CD4-positive, alpha-beta memory T cell (primary cell): ENCODE measurements at regions of chrX and their contacts with region 1.

Region 1: GRCh38 chrX:103686199-103687072 is at the start of gene MORF4L2:
- DNase-seq: peak; percentile 84 to 98 (median 94)
- H3K4me3 ChIP-seq: peak within 1 kb of the TSS; percentile 91 to 94
- H3K4me3 Mint-ChIP-seq: peak within 1 kb of the TSS in 7 of 8 donors; percentile 74 to 83 (median 79)
- H3K27ac ChIP-seq: peak within 1 kb of the TSS; percentile 85
- H3K27ac Mint-ChIP-seq: peak within 1 kb of the TSS; percentile 5 to 90 (median 84)
- H3K4me1 ChIP-seq: peaks cover 21% of the 10 kb centered on the region
- H3K4me1 Mint-ChIP-seq: peaks cover 0 to 15% (median 3%) of the 10 kb centered on the region in 4 donors
- H3K27me3 ChIP-seq: no peaks in the 10 kb centered on the region
- H3K27me3 Mint-ChIP-seq: no peaks in the 10 kb centered on the region
- total RNA-seq, gene MORF4L2: 105 to 110 TPM

Region 2: DNA sequence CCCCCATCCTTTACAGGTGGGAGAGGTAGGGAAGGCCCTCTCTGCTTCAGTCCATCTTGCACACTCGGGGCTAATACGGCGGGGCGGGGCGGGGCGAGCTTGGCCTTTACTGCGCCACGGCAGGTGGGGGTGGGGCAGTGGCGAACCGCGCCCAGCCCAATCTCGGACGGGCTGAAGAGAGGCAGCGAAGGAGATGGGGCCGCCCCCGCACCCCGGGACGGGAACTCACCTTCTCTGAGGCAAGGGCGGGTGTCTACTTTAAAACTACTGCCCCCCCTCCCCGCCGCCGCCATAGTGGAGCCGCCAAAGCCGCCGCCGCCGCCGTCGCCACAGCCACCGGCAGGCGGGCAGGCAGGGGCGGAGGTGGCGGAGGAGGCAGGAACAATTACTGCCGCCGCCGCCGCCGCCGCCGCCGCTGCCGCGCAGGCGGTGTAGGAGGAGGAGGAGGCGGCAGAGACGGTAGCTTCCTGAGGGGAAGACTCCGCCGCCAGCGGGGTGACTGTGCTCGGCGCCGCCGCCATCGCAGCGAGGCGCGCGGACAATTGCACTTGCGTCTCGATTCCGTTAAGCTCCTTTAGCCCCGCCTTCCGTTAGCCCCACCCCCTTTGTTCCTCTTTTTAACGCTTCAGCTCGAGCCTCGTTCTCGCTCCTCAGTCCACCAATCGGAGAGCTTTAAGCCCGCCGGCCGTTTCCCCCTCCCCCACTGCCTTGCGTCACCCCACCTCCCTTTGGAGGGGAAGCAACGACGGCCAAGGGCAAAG is 1754.8 kb before region 1 on chrX and contains the start of gene ZMAT1:
- CTCF ChIA-PET with region 1: no interaction called
- POLR2A ChIA-PET with region 1: interaction called, 3 read pairs
- intact Hi-C with region 1: loop called (anchors 10 kb)
- DNase-seq: peak; percentile 85 to 94 (median 89)
- H3K4me3 ChIP-seq: peak within 1 kb of the TSS in 1 of 2 donors; percentile 45
- H3K4me3 Mint-ChIP-seq: peak within 1 kb of the TSS; percentile 81 to 93 (median 88)
- H3K27ac ChIP-seq: peak within 1 kb of the TSS; percentile 66
- H3K27ac Mint-ChIP-seq: peak within 1 kb of the TSS; percentile 94 to 99 (median 95)
- H3K4me1 ChIP-seq: peaks cover 8% of the 10 kb centered on the region
- H3K4me1 Mint-ChIP-seq: peaks cover 6 to 18% (median 16%) of the 10 kb centered on the region in 4 donors
- H3K27me3 ChIP-seq: no peaks in the 10 kb centered on the region
- H3K27me3 Mint-ChIP-seq: peaks cover 0 to 2% of the 10 kb centered on the region in 2 donors
- total RNA-seq, gene ZMAT1: 39.1 to 40.0 TPM

Region 3: DNA sequence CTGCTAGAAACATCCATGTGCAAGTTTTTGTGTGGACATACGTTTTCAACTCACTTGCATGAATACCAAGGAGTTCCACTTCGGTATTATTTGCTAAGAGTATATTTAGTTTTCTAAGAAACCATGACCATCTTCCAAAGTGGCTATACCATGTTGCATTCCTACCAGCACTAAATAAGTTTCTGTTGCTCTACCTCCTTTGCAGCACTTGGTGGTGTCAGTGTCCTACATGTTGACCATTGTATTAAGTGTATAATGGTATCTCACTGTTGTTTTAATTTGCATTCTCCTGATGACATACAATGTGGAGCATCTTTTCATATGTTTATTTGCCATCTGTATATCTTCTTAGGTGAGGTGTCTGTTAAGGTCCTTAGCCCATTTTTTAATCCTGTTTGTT is 1043.2 kb before region 1 on chrX:
- CTCF ChIA-PET with region 1: no interaction called
- POLR2A ChIA-PET with region 1: no interaction called
- intact Hi-C with region 1: no loop called
- DNase-seq: no peak
- H3K4me3 ChIP-seq: no peak overlapping the region
- H3K4me3 Mint-ChIP-seq: no peak overlapping the region
- H3K27ac ChIP-seq: no peak overlapping the region
- H3K27ac Mint-ChIP-seq: no peak overlapping the region
- H3K4me1 ChIP-seq: no peaks in the 10 kb centered on the region
- H3K4me1 Mint-ChIP-seq: peaks cover 0 to 3% (median 0%) of the 10 kb centered on the region in 4 donors
- H3K27me3 ChIP-seq: no peaks in the 10 kb centered on the region
- H3K27me3 Mint-ChIP-seq: no peaks in the 10 kb centered on the region

Region 4: DNA sequence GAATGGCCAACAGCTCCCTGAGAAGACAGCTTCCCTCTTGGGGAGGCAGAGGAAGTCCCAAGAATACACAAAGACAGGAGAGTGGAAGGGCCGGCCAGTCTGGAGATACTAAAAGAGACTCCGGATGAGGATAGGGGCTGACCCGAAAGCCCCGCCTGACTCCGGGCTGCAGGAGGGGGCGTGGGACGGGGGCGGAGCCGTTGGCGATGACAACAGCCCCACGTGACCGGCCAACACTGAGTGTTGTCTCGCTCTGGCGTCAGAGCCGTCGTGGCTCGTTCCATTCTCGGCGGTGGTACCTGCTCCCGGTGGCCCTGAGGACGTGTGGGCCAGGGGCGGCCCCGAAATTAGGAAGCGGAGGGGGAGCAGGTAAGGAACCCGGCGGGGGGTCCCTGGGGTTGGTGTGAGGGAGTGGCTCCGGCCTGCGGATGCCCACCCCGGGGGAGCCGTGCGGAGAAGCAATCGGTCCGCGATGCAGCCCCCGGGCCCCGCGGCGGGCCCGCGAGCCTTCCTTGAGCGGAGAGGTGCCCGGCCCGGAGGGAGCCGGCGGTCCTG is 471.5 kb before region 1 on chrX and contains the start of gene BEX4:
- CTCF ChIA-PET with region 1: no interaction called
- POLR2A ChIA-PET with region 1: no interaction called
- intact Hi-C with region 1: loop called (anchors 2 kb)
- DNase-seq: peak; percentile 76 to 83 (median 78)
- H3K4me3 ChIP-seq: peak within 1 kb of the TSS; percentile 9 to 17
- H3K4me3 Mint-ChIP-seq: peak within 1 kb of the TSS; percentile 82 to 92 (median 88)
- H3K27ac ChIP-seq: peak within 1 kb of the TSS; percentile 77
- H3K27ac Mint-ChIP-seq: peak within 1 kb of the TSS; percentile 74 to 95 (median 90)
- H3K4me1 ChIP-seq: peaks cover 12% of the 10 kb centered on the region
- H3K4me1 Mint-ChIP-seq: peaks cover 0 to 17% (median 4%) of the 10 kb centered on the region in 4 donors
- H3K27me3 ChIP-seq: no peaks in the 10 kb centered on the region
- H3K27me3 Mint-ChIP-seq: peaks cover 0 to 1% of the 10 kb centered on the region in 2 donors
- total RNA-seq, gene BEX4: 38.9 to 39.6 TPM

Region 5: DNA sequence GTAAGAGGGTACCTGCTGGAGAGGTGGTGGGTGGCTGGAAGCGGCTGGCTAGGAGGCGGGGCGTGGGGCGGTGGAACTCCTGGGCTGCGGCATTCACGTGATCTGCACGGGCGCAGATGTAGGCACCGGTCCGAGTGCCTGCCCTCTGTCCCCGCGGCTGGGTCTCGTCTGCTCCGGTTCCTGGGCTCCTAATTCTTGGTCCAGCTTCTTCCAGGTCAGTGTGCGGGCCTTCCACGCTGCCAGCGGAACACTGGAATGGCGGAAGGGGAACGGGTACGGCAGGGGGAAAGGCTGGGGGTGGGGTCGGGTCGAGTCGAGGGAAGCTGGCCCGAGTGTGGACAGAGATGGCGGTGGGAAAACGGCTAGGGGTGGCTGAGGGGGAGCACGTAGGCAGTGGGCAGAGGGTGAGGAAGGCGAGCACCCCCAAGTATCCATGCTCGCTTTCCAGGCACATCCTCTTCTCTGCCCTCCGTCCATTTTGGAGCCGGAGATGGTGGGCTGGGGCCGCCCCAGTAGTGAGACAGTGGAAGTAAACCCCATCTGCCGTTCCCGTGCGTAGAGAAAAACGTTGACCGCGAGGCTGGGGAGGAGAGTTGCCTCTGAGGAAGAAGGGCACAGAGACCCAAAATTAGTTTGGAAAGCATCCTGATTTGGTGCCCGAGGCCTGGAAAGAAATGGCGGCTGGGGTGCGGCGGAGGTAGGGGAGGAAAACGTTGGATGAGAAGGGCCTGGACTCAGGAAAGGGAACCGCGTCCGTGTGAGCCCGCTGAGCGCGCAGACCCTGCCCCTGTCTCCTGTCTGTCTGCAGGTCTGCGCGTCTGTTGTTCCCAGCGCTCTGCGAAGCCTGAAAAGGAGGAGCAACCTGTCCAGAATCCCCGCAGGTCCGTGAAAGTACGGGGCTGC is 100.8 kb before region 1 on chrX and contains the start of gene TCEAL4:
- CTCF ChIA-PET with region 1: no interaction called
- POLR2A ChIA-PET with region 1: no interaction called
- intact Hi-C with region 1: loop called (anchors 1 kb)
- DNase-seq: peak in 3 of 5 donors; percentile 4 to 20 (median 13)
- H3K4me3 ChIP-seq: peak within 1 kb of the TSS in 1 of 2 donors; percentile 53
- H3K4me3 Mint-ChIP-seq: peak within 1 kb of the TSS; percentile 86 to 93 (median 91)
- H3K27ac ChIP-seq: peak within 1 kb of the TSS; percentile 26
- H3K27ac Mint-ChIP-seq: peak within 1 kb of the TSS; percentile 18 to 87 (median 81)
- H3K4me1 ChIP-seq: peaks cover 4% of the 10 kb centered on the region
- H3K4me1 Mint-ChIP-seq: peaks cover 9 to 15% (median 9%) of the 10 kb centered on the region in 4 donors
- H3K27me3 ChIP-seq: no peaks in the 10 kb centered on the region
- H3K27me3 Mint-ChIP-seq: peaks cover 0 to under 1% of the 10 kb centered on the region in 2 donors
- total RNA-seq, gene TCEAL4: 10.0 to 11.2 TPM

Region 6: DNA sequence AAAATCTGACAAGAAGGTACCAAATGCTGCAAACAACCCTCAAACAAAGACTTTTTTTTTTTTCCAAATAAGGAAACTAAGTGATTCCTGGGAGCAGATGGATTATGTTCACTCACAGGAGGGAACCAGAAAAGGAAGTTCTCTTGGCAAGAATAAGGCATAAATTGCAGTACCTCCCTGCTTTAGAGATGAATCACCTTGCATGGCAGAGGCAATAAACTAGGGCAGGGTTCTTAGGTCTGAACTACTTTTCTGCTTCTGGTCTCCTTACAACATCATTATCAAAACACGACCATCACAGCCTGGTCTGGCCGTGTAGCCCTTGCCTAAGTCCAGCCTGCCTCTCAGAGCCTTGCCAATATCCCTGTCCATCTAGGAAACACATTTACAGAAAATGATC is 30.5 kb after region 1 on chrX:
- CTCF ChIA-PET with region 1: no interaction called
- POLR2A ChIA-PET with region 1: no interaction called
- intact Hi-C with region 1: no loop called
- DNase-seq: no peak
- H3K4me3 ChIP-seq: no peak overlapping the region
- H3K4me3 Mint-ChIP-seq: no peak overlapping the region
- H3K27ac ChIP-seq: no peak overlapping the region
- H3K27ac Mint-ChIP-seq: no peak overlapping the region
- H3K4me1 ChIP-seq: no peaks in the 10 kb centered on the region
- H3K4me1 Mint-ChIP-seq: no peaks in the 10 kb centered on the region
- H3K27me3 ChIP-seq: no peaks in the 10 kb centered on the region
- H3K27me3 Mint-ChIP-seq: peaks cover 0 to 2% of the 10 kb centered on the region in 2 donors

Region 7: DNA sequence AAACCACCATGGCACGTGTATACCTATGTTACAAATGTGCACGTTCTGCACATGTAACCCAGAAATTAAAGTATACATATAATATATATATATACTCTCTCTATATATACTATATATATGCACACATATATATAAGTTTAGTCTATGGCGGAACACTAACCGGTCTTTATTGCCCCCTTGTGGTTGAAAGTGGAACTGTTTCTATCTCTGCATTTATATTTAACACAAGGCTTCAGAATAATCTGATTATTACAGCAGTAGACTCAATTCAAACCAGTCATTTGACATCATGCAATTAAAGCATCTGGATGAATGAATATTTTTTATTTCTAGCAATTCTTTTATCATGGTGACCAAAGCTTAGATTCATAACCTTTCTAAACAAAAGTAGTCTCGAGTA is 131.1 kb after region 1 on chrX:
- CTCF ChIA-PET with region 1: no interaction called
- POLR2A ChIA-PET with region 1: no interaction called
- intact Hi-C with region 1: loop called (anchors 1 kb)
- DNase-seq: peak; percentile 14 to 60 (median 54)
- H3K4me3 ChIP-seq: no peak overlapping the region
- H3K4me3 Mint-ChIP-seq: no peak overlapping the region
- H3K27ac ChIP-seq: no peak overlapping the region
- H3K27ac Mint-ChIP-seq: no peak overlapping the region
- H3K4me1 ChIP-seq: no peaks in the 10 kb centered on the region
- H3K4me1 Mint-ChIP-seq: no peaks in the 10 kb centered on the region
- H3K27me3 ChIP-seq: no peaks in the 10 kb centered on the region
- H3K27me3 Mint-ChIP-seq: peaks cover 10% of the 10 kb centered on the region in 2 donors

Region 8: DNA sequence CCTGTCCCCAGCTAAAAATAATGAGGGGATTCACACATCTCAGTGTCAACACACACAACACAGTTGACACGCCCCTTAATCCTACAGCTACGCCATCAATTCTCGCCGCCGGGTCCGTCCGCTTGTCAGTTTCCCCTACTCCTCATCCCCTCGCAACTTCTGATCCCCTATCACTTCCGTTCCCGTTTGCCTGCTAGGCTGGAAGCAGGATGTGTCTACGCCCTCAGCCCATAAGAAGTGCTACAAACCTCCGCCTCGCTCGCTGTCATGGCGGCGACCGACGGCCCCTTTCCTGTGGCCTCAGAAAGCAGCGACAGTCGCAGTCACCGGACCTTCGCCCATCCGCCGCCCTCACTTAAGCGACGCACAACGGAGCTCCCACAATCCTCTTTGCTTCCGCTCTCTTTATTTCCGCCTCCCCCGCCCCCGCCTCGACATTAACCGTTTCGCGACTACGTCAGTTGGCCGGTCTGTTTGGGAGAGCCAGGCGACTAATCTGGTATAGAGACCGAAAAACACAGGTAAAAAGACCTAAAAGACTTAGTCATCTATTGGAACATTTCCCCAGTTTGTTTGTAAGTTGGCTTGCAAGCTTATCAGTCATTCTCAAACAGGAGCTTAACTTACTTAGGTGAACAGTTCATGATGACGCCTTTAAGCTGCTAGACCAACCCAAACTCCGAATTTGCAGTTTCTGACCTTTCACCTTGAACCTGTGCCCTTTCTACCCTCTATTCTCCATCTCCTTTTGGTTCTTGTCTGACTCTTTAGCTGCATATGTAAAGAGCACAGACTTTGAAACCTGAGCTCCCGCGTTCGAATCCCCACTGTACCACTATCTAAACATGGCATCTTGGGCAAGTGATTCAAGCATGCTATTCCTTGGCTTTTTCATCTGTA is 470.4 kb after region 1 on chrX and contains the start of gene SLC25A53:
- CTCF ChIA-PET with region 1: no interaction called
- POLR2A ChIA-PET with region 1: interaction called, 15 read pairs
- intact Hi-C with region 1: no loop called
- DNase-seq: peak; percentile 77 to 89 (median 81)
- H3K4me3 ChIP-seq: peak within 1 kb of the TSS; percentile 71 to 78
- H3K4me3 Mint-ChIP-seq: peak within 1 kb of the TSS; percentile 93 to 100 (median 96)
- H3K27ac ChIP-seq: peak within 1 kb of the TSS; percentile 73
- H3K27ac Mint-ChIP-seq: peak within 1 kb of the TSS; percentile 96 to 100 (median 99)
- H3K4me1 ChIP-seq: peaks cover 19% of the 10 kb centered on the region
- H3K4me1 Mint-ChIP-seq: peaks cover 4 to 33% (median 6%) of the 10 kb centered on the region in 4 donors
- H3K27me3 ChIP-seq: no peaks in the 10 kb centered on the region
- H3K27me3 Mint-ChIP-seq: no peaks in the 10 kb centered on the region
- total RNA-seq, gene SLC25A53: 20.9 to 21.0 TPM